Activated CD4-positive, alpha-beta memory T cell treated with anti-CD3 and anti-CD28 coated beads for 36 hours (primary cell): ENCODE measurements at regions of chr17 and their contacts with region 1.

Region 1: GRCh38 chr17:63773381-63774140 is at the start of gene CCDC47:
- DNase-seq: peak; percentile 99
- H3K4me3 Mint-ChIP-seq: peak within 1 kb of the TSS; percentile 95
- H3K27ac Mint-ChIP-seq: peak within 1 kb of the TSS; percentile 100
- H3K4me1 Mint-ChIP-seq: peaks cover 47% of the 10 kb centered on the region
- H3K27me3 Mint-ChIP-seq: no peaks in the 10 kb centered on the region
- total RNA-seq, gene CCDC47: 57.6 to 60.5 TPM

Region 2: GRCh38 chr17:63549946-63550807 is 223.4 kb before region 1 on chr17 and contains the start of gene DCAF7:
- CTCF ChIA-PET with region 1: no interaction called
- POLR2A ChIA-PET with region 1: no interaction called
- intact Hi-C with region 1: loop called (anchors 2 kb)
- DNase-seq: peak; percentile 100
- H3K4me3 Mint-ChIP-seq: peak within 1 kb of the TSS; percentile 85
- H3K27ac Mint-ChIP-seq: peak within 1 kb of the TSS; percentile 96
- H3K4me1 Mint-ChIP-seq: peaks cover 32% of the 10 kb centered on the region
- H3K27me3 Mint-ChIP-seq: no peaks in the 10 kb centered on the region
- total RNA-seq, gene DCAF7: 118 to 119 TPM

Region 3: GRCh38 chr17:63621766-63622519 is 151.6 kb before region 1 on chr17 and contains the start of gene MAP3K3:
- CTCF ChIA-PET with region 1: interaction called, 3 read pairs
- POLR2A ChIA-PET with region 1: interaction called, 4 read pairs
- intact Hi-C with region 1: loop called (anchors 1 kb)
- DNase-seq: peak; percentile 99
- H3K4me3 Mint-ChIP-seq: peak within 1 kb of the TSS; percentile 99
- H3K27ac Mint-ChIP-seq: peak within 1 kb of the TSS; percentile 87
- H3K4me1 Mint-ChIP-seq: peaks cover 38% of the 10 kb centered on the region
- H3K27me3 Mint-ChIP-seq: no peaks in the 10 kb centered on the region
- total RNA-seq, gene MAP3K3: 32.8 to 34.0 TPM

Region 4: GRCh38 chr17:63741221-63742049 is 32.1 kb before region 1 on chr17 and contains the start of gene STRADA:
- CTCF ChIA-PET with region 1: interaction called, 4 read pairs
- POLR2A ChIA-PET with region 1: interaction called, 34 read pairs
- intact Hi-C with region 1: loop called (anchors 1 kb)
- DNase-seq: peak; percentile 100
- H3K4me3 Mint-ChIP-seq: peak within 1 kb of the TSS; percentile 91
- H3K27ac Mint-ChIP-seq: peak within 1 kb of the TSS; percentile 98
- H3K4me1 Mint-ChIP-seq: peaks cover 23% of the 10 kb centered on the region
- H3K27me3 Mint-ChIP-seq: no peaks in the 10 kb centered on the region
- total RNA-seq, gene STRADA: 64.8 to 69.7 TPM

Region 5: DNA sequence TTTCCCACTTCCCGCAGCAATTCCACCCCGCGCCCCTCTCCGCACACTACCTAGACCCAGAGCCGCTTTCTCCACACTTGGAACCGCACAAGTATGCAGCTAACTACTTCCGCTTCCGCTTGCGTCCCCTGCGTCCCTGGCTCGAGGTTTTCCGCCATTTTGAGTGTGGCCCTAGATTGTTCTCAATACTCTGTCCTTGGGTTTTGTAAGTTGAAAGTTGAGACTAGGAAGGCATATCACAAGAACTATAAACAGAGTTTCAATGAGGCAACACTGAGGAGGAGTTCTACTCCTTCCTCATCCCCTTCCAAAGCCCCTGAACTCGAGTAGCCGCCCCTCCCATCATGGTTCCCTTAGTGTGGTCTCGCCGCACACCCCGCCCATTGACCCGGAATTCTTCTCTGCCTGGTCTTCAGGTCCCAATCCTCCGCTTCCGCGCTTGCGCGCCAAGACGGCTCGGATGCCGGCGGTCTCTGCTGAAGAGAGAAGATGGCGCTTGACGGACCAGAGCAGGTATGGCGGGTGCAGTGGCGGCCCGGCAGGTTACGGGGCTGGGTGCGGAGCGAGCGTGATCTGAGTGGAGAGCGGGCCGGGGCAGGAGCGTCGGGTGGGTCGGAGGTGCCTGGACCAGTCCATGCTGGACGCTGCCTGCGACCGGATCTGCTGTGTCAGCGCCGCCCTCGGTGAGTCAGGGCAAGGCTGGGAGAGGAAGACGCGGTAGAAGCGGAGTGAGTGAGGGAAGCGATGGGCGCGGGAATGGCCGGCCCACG is 53.6 kb after region 1 on chr17 and contains the starts of genes FTSJ3 and PSMC5:
- CTCF ChIA-PET with region 1: interaction called, 11 read pairs
- POLR2A ChIA-PET with region 1: interaction called, 20 read pairs
- intact Hi-C with region 1: loop called (anchors 1 kb)
- DNase-seq: peak; percentile 97
- H3K4me3 Mint-ChIP-seq: peak within 1 kb of the TSS; percentile 94
- H3K27ac Mint-ChIP-seq: peak within 1 kb of the TSS; percentile 98
- H3K4me1 Mint-ChIP-seq: peaks cover 75% of the 10 kb centered on the region
- H3K27me3 Mint-ChIP-seq: no peaks in the 10 kb centered on the region
- total RNA-seq, gene FTSJ3: 41.5 to 42.8 TPM
- total RNA-seq, gene PSMC5: 165 to 171 TPM

Region 6: DNA sequence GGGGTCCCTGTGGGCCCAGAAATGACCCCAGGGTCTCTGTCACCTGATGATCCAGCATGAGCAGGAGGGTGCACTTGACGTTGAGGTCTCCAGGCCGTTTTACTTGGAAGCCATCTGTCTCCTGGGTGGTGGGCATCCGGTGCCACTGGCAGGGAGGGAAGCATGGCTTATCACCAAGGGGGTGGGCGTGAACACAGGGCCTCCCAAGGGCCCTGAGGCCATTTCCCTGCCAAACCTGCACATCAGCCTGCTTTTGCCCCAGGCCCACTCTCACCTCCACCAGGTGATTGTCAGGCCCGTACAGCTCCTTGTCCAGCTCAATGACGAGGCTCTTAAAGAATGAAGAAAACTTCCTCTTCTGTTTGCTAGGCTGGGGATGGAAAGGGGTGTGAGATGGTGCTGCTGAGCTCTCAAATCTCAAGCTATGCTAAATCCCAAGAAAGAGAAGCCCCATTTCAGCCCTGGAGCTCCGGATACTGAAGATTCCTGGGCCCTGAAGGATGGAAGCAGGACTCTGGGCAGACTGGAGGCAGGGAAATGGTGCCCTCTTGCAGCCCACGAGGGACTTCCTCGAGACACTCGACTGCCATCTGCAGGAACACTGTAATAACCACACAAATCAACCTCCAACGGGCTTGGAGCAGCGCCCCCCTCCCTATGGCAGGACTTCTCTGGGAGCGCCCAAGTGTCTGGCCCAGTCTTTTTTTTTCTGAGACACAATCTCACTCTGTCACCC is 61.0 kb after region 1 on chr17:
- CTCF ChIA-PET with region 1: interaction called, 11 read pairs
- POLR2A ChIA-PET with region 1: no interaction called
- intact Hi-C with region 1: no loop called
- DNase-seq: peak; percentile 82
- H3K4me3 Mint-ChIP-seq: no peak overlapping the region
- H3K27ac Mint-ChIP-seq: peak overlapping the region; percentile 72
- H3K4me1 Mint-ChIP-seq: peaks cover 47% of the 10 kb centered on the region
- H3K27me3 Mint-ChIP-seq: no peaks in the 10 kb centered on the region

Region 7: DNA sequence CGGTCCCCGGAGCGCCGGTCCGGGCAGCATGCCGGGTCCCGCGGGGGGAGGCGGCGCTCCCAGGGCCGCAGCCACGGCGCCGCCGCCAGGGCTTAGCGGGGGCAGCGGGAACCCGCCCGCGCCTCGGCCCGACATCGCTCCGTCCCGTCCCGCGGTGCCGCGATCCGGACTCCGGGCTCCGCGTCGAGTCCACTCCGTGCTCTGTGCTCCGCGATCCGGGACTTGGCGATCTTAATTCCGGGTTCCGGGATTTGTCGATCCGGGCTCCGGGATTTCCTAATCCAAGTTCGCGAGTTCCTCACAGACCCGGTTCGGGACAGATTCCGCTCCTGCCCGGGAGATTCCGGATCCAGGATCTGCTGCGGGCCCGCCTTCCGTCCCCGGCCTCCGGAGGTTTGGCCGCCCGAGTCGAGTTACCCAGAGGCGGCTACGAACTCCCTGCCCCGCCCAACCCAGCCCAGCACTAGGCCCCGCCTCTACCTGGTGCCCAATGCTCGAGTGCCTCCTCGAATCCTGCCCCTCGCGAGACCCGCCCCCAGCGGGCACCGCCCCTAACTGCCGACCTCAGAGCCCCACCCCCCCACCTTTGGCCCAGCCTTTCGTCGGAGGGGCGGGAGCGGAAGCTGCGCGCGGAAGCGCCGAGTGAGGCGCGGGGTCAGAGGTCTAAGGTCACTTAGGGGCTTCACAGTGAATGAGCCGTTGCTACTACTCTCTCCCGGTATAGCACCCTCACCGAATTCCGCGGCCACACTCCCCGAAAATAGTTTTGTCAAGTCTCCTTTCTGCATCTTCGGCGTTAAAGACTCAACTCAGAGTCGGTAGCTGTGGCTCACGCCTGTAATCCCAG is 69.2 kb after region 1 on chr17 and contains the start of gene SMARCD2:
- CTCF ChIA-PET with region 1: no interaction called
- POLR2A ChIA-PET with region 1: interaction called, 8 read pairs
- intact Hi-C with region 1: loop called (anchors 1 kb)
- DNase-seq: peak; percentile 100
- H3K4me3 Mint-ChIP-seq: peak within 1 kb of the TSS; percentile 95
- H3K27ac Mint-ChIP-seq: peak within 1 kb of the TSS; percentile 95
- H3K4me1 Mint-ChIP-seq: peaks cover 34% of the 10 kb centered on the region
- H3K27me3 Mint-ChIP-seq: no peaks in the 10 kb centered on the region
- total RNA-seq, gene SMARCD2: 109 to 111 TPM

Region 8: DNA sequence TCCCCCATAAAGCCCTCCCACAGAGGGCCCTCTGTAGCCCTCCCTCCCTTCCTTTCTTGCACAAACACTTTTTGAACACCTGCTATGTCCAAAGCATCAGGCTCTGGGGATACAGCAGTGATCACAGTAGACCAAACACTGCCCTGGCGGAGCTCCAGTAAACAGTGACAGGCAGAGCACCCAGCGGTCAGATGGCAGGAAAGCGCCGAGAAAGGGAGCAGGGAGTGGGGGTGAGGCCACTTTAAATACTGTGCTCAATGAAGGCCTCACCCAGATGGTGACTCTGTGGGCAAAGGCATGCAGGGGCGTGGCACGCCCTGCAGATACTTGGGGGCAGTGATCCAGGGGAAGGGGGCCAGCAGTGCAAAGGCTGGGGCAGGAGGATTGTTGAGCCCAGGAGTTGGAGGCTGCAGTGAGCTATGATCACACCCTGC is 232.2 kb after region 1 on chr17:
- CTCF ChIA-PET with region 1: no interaction called
- POLR2A ChIA-PET with region 1: no interaction called
- intact Hi-C with region 1: no loop called
- DNase-seq: no peak
- H3K4me3 Mint-ChIP-seq: no peak overlapping the region
- H3K27ac Mint-ChIP-seq: peak overlapping the region; percentile 16
- H3K4me1 Mint-ChIP-seq: peaks cover 40% of the 10 kb centered on the region
- H3K27me3 Mint-ChIP-seq: no peaks in the 10 kb centered on the region